ENCODE measurements at regions of chr13 and their contacts with region 1.

Region 1: GRCh38 chr13:98717256-98717655 is 35.2 kb downstream of the SLC15A1 start:
- DNase-seq: no peak
- ATAC-seq: no peak
- H3K4me3 ChIP-seq: no peak overlapping the region
- H3K27ac ChIP-seq: no peak overlapping the region
- H3K4me1 ChIP-seq: peaks cover 10% of the 10 kb centered on the region
- H3K27me3 ChIP-seq: no peaks in the 10 kb centered on the region
- CTCF ChIP-seq: no peak

Region 2: GRCh38 chr13:98504371-98504963 is 212.8 kb before region 1 on chr13:
- CTCF ChIA-PET with region 1: no interaction called
- POLR2A ChIA-PET with region 1: interaction called, 15 read pairs
- intact Hi-C with region 1: no loop called
- DNase-seq: no peak
- ATAC-seq: no peak
- H3K4me3 ChIP-seq: no peak overlapping the region
- H3K27ac ChIP-seq: no peak overlapping the region
- H3K4me1 ChIP-seq: peaks cover 25% of the 10 kb centered on the region
- H3K27me3 ChIP-seq: no peaks in the 10 kb centered on the region
- CTCF ChIP-seq: no peak

Region 3: GRCh38 chr13:98706446-98707110 is 10.7 kb before region 1 on chr13:
- CTCF ChIA-PET with region 1: no interaction called
- POLR2A ChIA-PET with region 1: interaction called, 13 read pairs
- intact Hi-C with region 1: no loop called
- DNase-seq: peak; percentile 26
- ATAC-seq: peak; percentile 78
- H3K4me3 ChIP-seq: no peak overlapping the region
- H3K27ac ChIP-seq: no peak overlapping the region
- H3K4me1 ChIP-seq: peaks cover 4% of the 10 kb centered on the region; the same call in 1 of the 2 replicates
- H3K27me3 ChIP-seq: no peaks in the 10 kb centered on the region
- CTCF ChIP-seq: no peak